Activated B cell treated with CpG ODN at 0.5 μM for 24 hours (primary cell): ENCODE measurements at regions of chrX and their contacts with region 1.

Region 1: GRCh38 chrX:153554519-153555167 is 37.2 kb downstream of the ATP2B3 start:
- DNase-seq: peak; percentile 49
- ATAC-seq: peak; percentile 68
- H3K4me3 Mint-ChIP-seq: no peak overlapping the region
- H3K27ac Mint-ChIP-seq: no peak overlapping the region
- H3K4me1 Mint-ChIP-seq: no peaks in the 10 kb centered on the region
- H3K27me3 Mint-ChIP-seq: no peaks in the 10 kb centered on the region
- CTCF ChIP-seq: no peak

Region 2: GRCh38 chrX:153582896-153583295 is 28.3 kb after region 1 on chrX:
- CTCF ChIA-PET with region 1: no interaction called
- POLR2A ChIA-PET with region 1: no interaction called
- intact Hi-C with region 1: loop called (anchors 2 kb)
- DNase-seq: peak; percentile 53
- ATAC-seq: peak; percentile 100
- H3K4me3 Mint-ChIP-seq: peak overlapping the region; percentile 60
- H3K27ac Mint-ChIP-seq: peak overlapping the region; percentile 73
- H3K4me1 Mint-ChIP-seq: peaks cover 31% of the 10 kb centered on the region
- H3K27me3 Mint-ChIP-seq: no peaks in the 10 kb centered on the region
- CTCF ChIP-seq: no peak

Region 3: GRCh38 chrX:153599192-153600031 is 44.8 kb after region 1 on chrX:
- CTCF ChIA-PET with region 1: no interaction called
- POLR2A ChIA-PET with region 1: no interaction called
- intact Hi-C with region 1: loop called (anchors 2 kb)
- DNase-seq: peak; percentile 82
- ATAC-seq: peak; percentile 84
- H3K4me3 Mint-ChIP-seq: peak overlapping the region; percentile 77
- H3K27ac Mint-ChIP-seq: no peak overlapping the region
- H3K4me1 Mint-ChIP-seq: peaks cover 36% of the 10 kb centered on the region
- H3K27me3 Mint-ChIP-seq: no peaks in the 10 kb centered on the region
- CTCF ChIP-seq: no peak

Region 4: GRCh38 chrX:153609917-153610428 is 55.3 kb after region 1 on chrX:
- CTCF ChIA-PET with region 1: interaction called, 12 read pairs
- POLR2A ChIA-PET with region 1: no interaction called
- intact Hi-C with region 1: loop called (anchors 2 kb)
- DNase-seq: peak; percentile 63
- ATAC-seq: peak; percentile 92
- H3K4me3 Mint-ChIP-seq: peak overlapping the region; percentile 82
- H3K27ac Mint-ChIP-seq: no peak overlapping the region
- H3K4me1 Mint-ChIP-seq: peaks cover 9% of the 10 kb centered on the region
- H3K27me3 Mint-ChIP-seq: peaks cover 3% of the 10 kb centered on the region
- CTCF ChIP-seq: no peak

Region 5: GRCh38 chrX:153627675-153628111 is 73.0 kb after region 1 on chrX:
- CTCF ChIA-PET with region 1: no interaction called
- POLR2A ChIA-PET with region 1: no interaction called
- intact Hi-C with region 1: no loop called
- DNase-seq: no peak
- ATAC-seq: no peak
- H3K4me3 Mint-ChIP-seq: no peak overlapping the region
- H3K27ac Mint-ChIP-seq: no peak overlapping the region
- H3K4me1 Mint-ChIP-seq: no peaks in the 10 kb centered on the region
- H3K27me3 Mint-ChIP-seq: peaks cover 11% of the 10 kb centered on the region
- CTCF ChIP-seq: no peak

Region 6: DNA sequence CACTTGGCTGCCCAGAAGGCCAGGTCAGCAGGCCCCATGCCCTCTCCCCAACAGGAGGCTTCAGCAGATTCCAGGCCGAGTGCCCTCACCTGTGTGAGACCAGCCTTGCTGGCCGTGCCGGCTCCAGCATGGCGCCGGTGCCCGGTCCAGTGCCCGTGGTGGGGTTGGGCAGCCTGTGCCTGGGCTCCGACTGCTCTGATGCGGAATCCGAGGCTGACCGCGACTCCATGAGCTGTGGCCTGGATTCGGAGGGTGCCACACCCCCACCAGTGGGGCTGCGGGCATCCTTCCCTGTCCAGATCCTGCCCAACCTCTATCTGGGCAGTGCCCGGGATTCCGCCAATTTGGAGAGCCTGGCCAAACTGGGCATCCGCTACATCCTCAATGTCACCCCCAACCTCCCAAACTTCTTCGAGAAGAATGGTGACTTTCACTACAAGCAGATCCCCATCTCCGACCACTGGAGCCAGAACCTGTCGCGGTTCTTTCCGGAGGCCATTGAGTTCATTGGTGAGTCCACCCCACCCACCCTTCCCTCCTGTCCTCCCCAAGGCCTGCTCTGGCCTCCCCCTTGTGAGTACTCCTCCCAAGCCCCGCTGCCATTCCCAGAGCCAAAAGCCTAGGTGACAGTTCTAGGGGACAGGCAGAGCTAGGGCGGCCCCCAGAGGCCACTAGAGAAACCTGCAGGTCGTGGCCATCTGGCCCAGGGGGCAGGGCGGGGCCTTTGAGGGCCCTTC is 94.7 kb after region 1 on chrX:
- CTCF ChIA-PET with region 1: interaction called, 4 read pairs
- POLR2A ChIA-PET with region 1: no interaction called
- intact Hi-C with region 1: loop called (anchors 1 kb)
- DNase-seq: no peak
- ATAC-seq: peak; percentile 80
- H3K4me3 Mint-ChIP-seq: no peak overlapping the region
- H3K27ac Mint-ChIP-seq: no peak overlapping the region
- H3K4me1 Mint-ChIP-seq: no peaks in the 10 kb centered on the region
- H3K27me3 Mint-ChIP-seq: peaks cover 1% of the 10 kb centered on the region
- CTCF ChIP-seq: no peak

Region 7: GRCh38 chrX:153662266-153662665 is 107.6 kb after region 1 on chrX:
- CTCF ChIA-PET with region 1: interaction called, 37 read pairs
- POLR2A ChIA-PET with region 1: interaction called, 9 read pairs
- intact Hi-C with region 1: loop called (anchors 1 kb)
- DNase-seq: peak; percentile 44
- ATAC-seq: no peak
- H3K4me3 Mint-ChIP-seq: peak overlapping the region; percentile 55
- H3K27ac Mint-ChIP-seq: no peak overlapping the region
- H3K4me1 Mint-ChIP-seq: peaks cover 2% of the 10 kb centered on the region
- H3K27me3 Mint-ChIP-seq: peaks cover 11% of the 10 kb centered on the region
- CTCF ChIP-seq: no peak

Region 8: GRCh38 chrX:153667956-153668396 is 113.3 kb after region 1 on chrX:
- CTCF ChIA-PET with region 1: interaction called, 37 read pairs
- POLR2A ChIA-PET with region 1: no interaction called
- intact Hi-C with region 1: loop called (anchors 1 kb)
- DNase-seq: peak; percentile 66
- ATAC-seq: peak; percentile 90
- H3K4me3 Mint-ChIP-seq: peak overlapping the region; percentile 68
- H3K27ac Mint-ChIP-seq: no peak overlapping the region
- H3K4me1 Mint-ChIP-seq: peaks cover 5% of the 10 kb centered on the region
- H3K27me3 Mint-ChIP-seq: peaks cover 7% of the 10 kb centered on the region
- CTCF ChIP-seq: no peak